CD8-positive, alpha-beta T cell (primary cell): ENCODE measurements at regions of chr11 and their contacts with region 1.

Region 1: GRCh38 chr11:121426476-121427399 is 25.4 kb upstream of the SORL1 start:
- DNase-seq: peak in 8 of 9 experiments; percentile 33 to 76 (median 58)
- ATAC-seq: peak; percentile 72
- H3K4me3 ChIP-seq: peak overlapping the region; percentile 10 to 38
- H3K4me3 Mint-ChIP-seq: peak overlapping the region; percentile 77
- H3K27ac ChIP-seq: no peak overlapping the region
- H3K27ac Mint-ChIP-seq: no peak overlapping the region
- H3K4me1 ChIP-seq: peaks cover 20% of the 10 kb centered on the region
- H3K4me1 Mint-ChIP-seq: peaks cover 46% of the 10 kb centered on the region
- H3K27me3 ChIP-seq: no peaks in the 10 kb centered on the region
- H3K27me3 Mint-ChIP-seq: no peaks in the 10 kb centered on the region
- CTCF ChIP-seq: peak; percentile 11

Region 2: GRCh38 chr11:121446752-121447156 is 20.0 kb after region 1 on chr11:
- CTCF ChIA-PET with region 1: interaction called, 6 read pairs
- POLR2A ChIA-PET with region 1: interaction called, 38 read pairs
- intact Hi-C with region 1: loop called in 1 of 2 experiments (anchors 2 kb)
- DNase-seq: no peak
- ATAC-seq: no peak
- H3K4me3 ChIP-seq: no peak overlapping the region
- H3K4me3 Mint-ChIP-seq: no peak overlapping the region
- H3K27ac ChIP-seq: no peak overlapping the region
- H3K27ac Mint-ChIP-seq: peak overlapping the region; percentile 92
- H3K4me1 ChIP-seq: peaks cover 82% of the 10 kb centered on the region
- H3K4me1 Mint-ChIP-seq: peaks cover 85% of the 10 kb centered on the region
- H3K27me3 ChIP-seq: no peaks in the 10 kb centered on the region
- H3K27me3 Mint-ChIP-seq: no peaks in the 10 kb centered on the region
- CTCF ChIP-seq: no peak

Region 3: DNA sequence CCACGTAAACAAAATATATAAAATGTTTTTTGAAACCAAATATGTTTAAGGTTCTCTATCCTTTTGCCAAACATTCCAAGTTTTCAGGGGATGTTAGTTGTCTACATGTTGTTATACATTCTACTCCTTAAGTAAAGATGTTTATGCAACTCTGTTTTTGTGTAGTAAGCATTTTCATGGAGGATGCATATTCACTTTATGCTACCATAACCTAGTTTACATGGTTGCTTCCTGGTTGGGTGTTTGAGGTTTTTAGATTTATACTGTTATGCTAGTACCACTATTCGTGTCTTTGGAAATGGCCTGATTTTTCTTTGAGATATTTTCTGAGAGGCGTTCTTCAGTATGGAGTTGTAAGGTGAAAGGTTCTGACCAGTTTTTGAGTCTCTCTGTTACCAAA is 157.1 kb after region 1 on chr11:
- CTCF ChIA-PET with region 1: no interaction called
- POLR2A ChIA-PET with region 1: no interaction called
- intact Hi-C with region 1: no loop called
- DNase-seq: no peak
- ATAC-seq: no peak
- H3K4me3 ChIP-seq: no peak overlapping the region
- H3K4me3 Mint-ChIP-seq: no peak overlapping the region
- H3K27ac ChIP-seq: peak overlapping the region in 1 of 2 experiments; percentile 23
- H3K27ac Mint-ChIP-seq: peak overlapping the region; percentile 86
- H3K4me1 ChIP-seq: peaks cover 19% of the 10 kb centered on the region
- H3K4me1 Mint-ChIP-seq: peaks cover 27% of the 10 kb centered on the region
- H3K27me3 ChIP-seq: no peaks in the 10 kb centered on the region
- H3K27me3 Mint-ChIP-seq: no peaks in the 10 kb centered on the region
- CTCF ChIP-seq: no peak